Dendritic cell treated with granulocyte-macrophage colony-stimulating factor and Interleukin-4, amounts not matched to agents 40 ng/mL and 50 ng/mL, for 4 days (primary cell): ENCODE measurements at regions of chr17 and their contacts with region 1.

Region 1: GRCh38 chr17:80866147-80866793 is 125.4 kb upstream of the CHMP6 start:
- H3K4me3 Mint-ChIP-seq: no peak overlapping the region
- H3K27ac Mint-ChIP-seq: no peak overlapping the region
- H3K4me1 Mint-ChIP-seq: peaks cover 29% of the 10 kb centered on the region
- H3K27me3 Mint-ChIP-seq: peaks cover 6% of the 10 kb centered on the region

Region 2: DNA sequence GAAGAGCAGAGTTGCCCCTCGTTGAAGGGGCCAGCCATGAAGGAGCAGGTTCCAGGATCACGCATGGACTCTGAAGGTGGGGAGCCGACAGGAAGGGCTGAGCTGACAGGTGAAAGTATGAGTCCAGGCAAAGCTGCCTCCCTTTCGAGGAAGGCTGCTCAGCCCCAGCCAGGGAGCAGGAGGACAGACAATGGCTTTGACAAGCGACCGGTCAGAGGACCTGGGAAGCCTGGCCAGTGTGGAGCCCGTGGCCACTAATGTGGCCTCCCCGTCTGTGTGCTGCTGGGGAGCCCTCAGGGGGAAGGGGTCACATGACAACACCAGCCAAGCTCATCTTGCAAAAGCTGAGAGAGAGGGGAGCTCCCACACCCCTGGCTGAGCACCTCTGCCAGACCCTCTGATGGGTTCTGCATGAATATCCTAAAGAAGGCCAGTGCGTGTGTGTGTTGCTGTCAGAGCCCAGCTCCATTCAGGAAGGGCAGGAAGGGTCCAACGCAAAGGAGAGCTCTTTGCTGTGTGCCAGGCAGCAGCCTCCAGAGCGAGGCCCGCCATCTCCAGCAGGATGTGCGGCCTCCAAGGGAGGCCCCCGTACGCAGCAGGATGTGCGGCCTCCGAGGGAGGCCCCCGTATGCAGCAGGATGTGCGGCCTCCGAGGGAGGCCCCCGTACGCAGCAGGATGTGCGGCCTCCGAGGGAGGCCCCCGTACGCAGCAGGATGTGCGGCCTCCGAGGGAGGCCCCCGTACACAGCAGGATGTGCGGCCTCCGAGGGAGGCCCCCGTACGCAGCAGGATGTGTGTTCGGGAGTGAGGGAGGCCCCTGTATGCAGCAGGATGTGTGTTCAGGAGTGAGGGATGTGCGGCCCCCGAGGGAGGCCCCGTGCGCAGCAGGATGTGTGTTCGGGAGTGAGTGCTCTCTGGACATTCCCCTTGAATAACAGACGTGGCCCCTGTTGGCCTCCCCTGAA is 23.2 kb after region 1 on chr17:
- intact Hi-C with region 1: no loop called
- H3K4me3 Mint-ChIP-seq: no peak overlapping the region
- H3K27ac Mint-ChIP-seq: peak overlapping the region; percentile 81
- H3K4me1 Mint-ChIP-seq: peaks cover 67% of the 10 kb centered on the region
- H3K27me3 Mint-ChIP-seq: peaks cover 9% of the 10 kb centered on the region

Region 3: GRCh38 chr17:80899402-80900268 is 33.4 kb after region 1 on chr17:
- intact Hi-C with region 1: loop called (anchors 2 kb)
- H3K4me3 Mint-ChIP-seq: no peak overlapping the region
- H3K27ac Mint-ChIP-seq: peak overlapping the region; percentile 18
- H3K4me1 Mint-ChIP-seq: peaks cover 9% of the 10 kb centered on the region
- H3K27me3 Mint-ChIP-seq: no peaks in the 10 kb centered on the region